Activated CD4-positive, alpha-beta T cell treated with anti-CD3 and anti-CD28 coated beads, Interleukin-2, amount 10 ng/mL, durations not matched to agents 24 days and 14 days (primary cell): ENCODE measurements at regions of chr1 and their contacts with region 1.

Region 1: DNA sequence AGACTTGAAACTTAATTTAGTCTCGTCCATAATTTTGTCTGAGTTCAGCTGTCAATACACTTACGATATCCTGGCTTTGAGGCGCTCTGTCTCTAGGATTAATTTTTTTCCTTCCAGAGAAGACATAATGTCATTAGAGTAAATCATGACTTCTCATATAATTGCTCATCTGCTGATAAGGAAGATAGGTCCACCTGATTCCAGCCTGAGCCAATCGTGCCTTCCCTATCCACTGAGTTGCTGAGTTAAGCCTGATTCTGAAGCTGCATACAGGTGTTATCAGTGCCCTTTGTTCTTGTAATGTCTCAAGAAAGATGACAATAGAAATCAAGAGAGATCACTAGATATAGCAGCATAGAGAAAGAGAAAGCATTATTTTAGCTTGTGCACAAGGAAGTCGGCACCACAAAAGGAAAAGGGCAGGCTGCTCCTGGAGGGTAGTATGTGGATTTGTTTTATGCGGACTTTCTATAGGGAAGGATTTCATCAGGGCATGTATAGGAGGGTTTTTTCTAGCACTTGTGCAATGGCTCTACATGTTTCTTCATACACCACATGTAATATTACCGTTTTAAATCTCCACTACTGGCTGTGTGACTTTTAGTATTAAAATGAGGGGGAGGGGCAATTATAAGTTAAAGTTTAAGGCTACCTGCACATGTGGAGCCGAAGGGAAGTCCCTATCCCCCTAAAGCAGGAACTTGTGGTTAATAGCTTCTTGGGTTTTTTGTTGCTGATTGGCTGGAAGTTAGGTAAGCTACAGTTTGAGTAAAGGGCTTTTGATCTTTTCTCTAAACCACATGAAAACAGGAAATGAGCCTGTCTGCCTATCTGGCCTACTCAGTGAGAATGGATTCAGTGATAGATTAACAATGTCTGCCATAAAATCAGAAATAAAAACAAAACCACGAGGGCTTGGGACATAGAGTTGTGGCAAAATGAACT is 133.4 kb downstream of the PLPPR5 start:
- DNase-seq: peak; percentile 88
- H3K4me3 Mint-ChIP-seq: peak overlapping the region; percentile 72
- H3K27ac Mint-ChIP-seq: peak overlapping the region; percentile 92
- H3K4me1 Mint-ChIP-seq: peaks cover 23% of the 10 kb centered on the region
- H3K27me3 Mint-ChIP-seq: no peaks in the 10 kb centered on the region

Region 2: DNA sequence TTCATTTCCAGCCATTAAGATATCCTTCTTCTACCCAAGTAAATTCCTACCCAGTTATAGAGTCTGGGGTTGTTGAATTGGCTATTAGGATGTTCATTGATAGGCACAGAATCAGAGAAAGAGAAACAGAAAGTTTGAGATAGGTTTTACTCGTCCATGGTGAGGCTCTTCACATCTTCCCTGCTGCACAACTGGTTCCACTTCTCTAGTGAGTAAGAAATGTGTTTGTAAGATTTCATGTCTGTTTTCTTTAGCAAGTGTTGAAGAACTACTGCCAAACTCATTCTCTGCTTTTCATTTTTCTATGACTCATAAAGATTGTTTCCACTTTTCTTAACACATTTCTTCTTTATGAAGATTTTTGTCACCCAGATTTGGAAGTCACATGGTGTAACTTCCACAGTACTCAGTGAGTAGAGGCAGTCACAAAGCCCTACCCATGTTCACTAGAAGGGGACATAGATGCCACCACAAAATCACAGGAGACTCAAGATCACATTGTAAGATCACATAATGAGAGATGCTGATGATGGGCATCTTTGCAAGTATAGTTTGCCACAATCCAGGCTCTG is 57.4 kb before region 1 on chr1:
- intact Hi-C with region 1: loop called (anchors 1 kb)
- DNase-seq: no peak
- H3K4me3 Mint-ChIP-seq: peak overlapping the region; percentile 36
- H3K27ac Mint-ChIP-seq: peak overlapping the region; percentile 8
- H3K4me1 Mint-ChIP-seq: peaks cover 12% of the 10 kb centered on the region
- H3K27me3 Mint-ChIP-seq: no peaks in the 10 kb centered on the region

Region 3: DNA sequence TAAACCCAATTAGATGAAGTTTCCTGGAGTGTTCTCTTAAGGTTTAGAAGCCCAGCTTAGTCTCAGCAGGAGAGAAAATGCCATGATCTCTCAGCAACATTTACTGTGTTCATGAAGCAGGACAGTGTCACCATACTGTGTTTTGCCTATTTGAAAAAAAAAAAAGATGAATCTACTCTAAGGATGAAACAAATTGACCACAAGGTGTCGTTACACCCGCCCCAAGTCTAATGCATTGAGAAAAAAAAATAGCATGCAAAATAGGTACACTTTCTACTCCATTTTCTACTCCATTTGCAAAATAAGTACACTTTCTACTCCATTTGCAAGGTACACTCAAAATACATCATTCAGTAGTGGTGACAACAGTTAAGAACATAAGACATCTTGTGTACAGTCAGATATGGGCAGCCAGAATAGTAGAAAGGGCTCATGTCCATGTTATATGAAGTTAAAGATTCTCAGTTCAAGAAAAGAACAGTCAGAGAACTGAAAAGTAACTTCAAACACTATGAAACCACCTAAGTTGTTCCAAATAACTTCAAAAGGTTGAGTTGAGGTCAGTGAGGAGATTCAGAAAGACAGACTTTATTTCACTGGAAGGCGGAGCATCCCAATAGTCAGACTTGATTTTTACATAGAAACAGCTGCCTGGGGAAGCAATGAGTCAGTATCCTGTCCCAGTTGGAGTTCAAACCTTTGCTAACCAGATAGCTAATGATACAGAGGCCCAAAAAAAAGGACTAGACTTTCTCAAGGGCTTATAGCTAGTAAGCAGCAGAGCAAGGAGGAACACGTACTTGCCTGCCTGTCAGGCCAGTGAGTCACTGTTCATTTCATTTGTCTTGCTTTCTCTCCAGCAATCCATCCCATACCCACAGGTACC is 120.1 kb after region 1 on chr1:
- intact Hi-C with region 1: loop called (anchors 1 kb)
- DNase-seq: peak; percentile 56
- H3K4me3 Mint-ChIP-seq: no peak overlapping the region
- H3K27ac Mint-ChIP-seq: peak overlapping the region; percentile 70
- H3K4me1 Mint-ChIP-seq: peaks cover 7% of the 10 kb centered on the region
- H3K27me3 Mint-ChIP-seq: peaks cover 2% of the 10 kb centered on the region